GM12878 (cell line): ENCODE measurements at regions of chr6 and their contacts with region 1.

Region 1: DNA sequence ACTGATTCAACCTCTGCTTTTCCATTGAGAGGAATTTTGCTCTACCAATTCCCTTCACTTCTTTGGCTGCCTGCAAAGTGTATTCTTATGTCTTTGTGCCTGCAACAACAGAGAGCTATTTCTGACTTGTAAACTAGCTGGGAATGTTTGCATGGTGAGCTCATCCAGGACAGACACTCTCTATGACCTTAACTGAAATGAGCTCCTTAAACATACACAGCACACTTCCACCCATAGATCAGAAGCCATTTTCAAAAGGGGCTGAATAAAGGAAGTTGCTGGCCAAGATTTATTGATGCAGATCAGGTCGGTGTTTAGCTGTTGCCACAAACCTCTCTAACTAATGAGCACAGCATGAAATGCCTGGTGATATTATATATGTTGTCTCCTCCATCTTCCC is 377.7 kb downstream of the BTBD9 start:
- DNase-seq: no peak
- ATAC-seq: peak; percentile 44
- H3K4me3 ChIP-seq: no peak overlapping the region
- H3K27ac ChIP-seq: no peak overlapping the region
- H3K4me1 ChIP-seq: peaks cover 10% of the 10 kb centered on the region
- H3K27me3 ChIP-seq: no peaks in the 10 kb centered on the region
- CTCF ChIP-seq: no peak
- EP300 ChIP-seq: no peak
- POLR2A ChIP-seq: no peak
- RAD21 ChIP-seq: no peak

Region 2: GRCh38 chr6:38034274-38034914 is 227.6 kb before region 1 on chr6:
- CTCF ChIA-PET with region 1: no interaction called
- POLR2A ChIA-PET with region 1: no interaction called
- RAD21 ChIA-PET with region 1: no interaction called
- SMC1A ChIA-PET with region 1: no interaction called
- in situ Hi-C with region 1: no loop called
- intact Hi-C with region 1: no loop called
- DNase-seq: no peak
- ATAC-seq: peak; percentile 49; the same call in 2 of the 3 replicates
- H3K4me3 ChIP-seq: no peak overlapping the region
- H3K27ac ChIP-seq: no peak overlapping the region
- H3K4me1 ChIP-seq: peaks cover 12% of the 10 kb centered on the region; the same call in 1 of the 2 replicates
- H3K27me3 ChIP-seq: no peaks in the 10 kb centered on the region
- CTCF ChIP-seq: peak; percentile 26 to 49 (median 43); a peak in 4 of 6 replicates
- EP300 ChIP-seq: no peak
- POLR2A ChIP-seq: no peak
- RAD21 ChIP-seq: peak; percentile 54

Region 3: GRCh38 chr6:38248500-38249234 is 13.4 kb before region 1 on chr6:
- CTCF ChIA-PET with region 1: interaction called, 3 read pairs
- POLR2A ChIA-PET with region 1: no interaction called
- RAD21 ChIA-PET with region 1: no interaction called
- SMC1A ChIA-PET with region 1: interaction called, 20 read pairs
- in situ Hi-C with region 1: no loop called
- intact Hi-C with region 1: no loop called
- DNase-seq: no peak
- ATAC-seq: no peak
- H3K4me3 ChIP-seq: no peak overlapping the region
- H3K27ac ChIP-seq: no peak overlapping the region
- H3K4me1 ChIP-seq: no peaks in the 10 kb centered on the region; the same call in 1 of the 2 replicates
- H3K27me3 ChIP-seq: no peaks in the 10 kb centered on the region
- CTCF ChIP-seq: no peak
- EP300 ChIP-seq: no peak
- POLR2A ChIP-seq: no peak
- RAD21 ChIP-seq: no peak